Common myeloid progenitor, CD34-positive (primary cell): ENCODE measurements at regions of chr2 and their contacts with region 1.

Region 1: DNA sequence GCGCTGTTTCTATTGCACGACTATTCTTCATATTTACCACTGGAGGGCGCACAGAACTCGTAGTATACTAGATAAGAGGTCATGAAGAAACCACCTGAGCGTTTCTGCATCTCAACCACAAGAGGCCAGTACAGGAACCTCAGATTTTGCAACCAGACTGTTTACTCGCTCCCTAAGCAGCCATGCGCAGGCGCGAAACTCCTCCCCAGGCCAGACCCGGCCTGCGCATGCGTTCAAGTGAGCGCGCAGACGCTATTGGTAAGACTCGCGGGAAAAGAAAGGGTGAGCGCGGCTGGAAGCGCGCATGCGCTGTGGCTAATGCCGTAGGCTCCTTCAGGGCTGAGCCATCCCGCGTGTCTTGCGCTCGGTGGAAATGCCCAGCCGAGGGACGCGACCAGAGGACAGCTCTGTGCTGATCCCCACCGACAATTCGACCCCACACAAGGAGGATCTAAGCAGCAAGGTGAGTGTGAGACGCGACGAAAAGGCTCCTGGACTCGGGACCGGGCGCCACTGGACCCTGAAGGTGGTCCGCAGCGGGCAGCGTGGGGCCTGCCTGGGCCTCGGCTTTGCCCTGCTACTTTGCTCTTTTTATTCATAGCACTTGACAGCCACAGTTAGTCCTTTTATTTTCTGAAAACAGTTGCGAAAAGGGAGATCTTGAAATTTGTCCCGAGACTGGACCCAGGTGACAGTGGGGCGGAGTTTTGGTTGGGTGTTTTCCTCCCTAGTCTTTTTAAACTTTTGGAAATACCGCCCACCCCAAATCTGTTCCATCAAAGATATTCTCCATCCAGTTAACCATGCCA is at the start of gene ASNSD1:
- DNase-seq: peak; percentile 99 to 100 (median 99)
- H3K4me3 ChIP-seq: peak within 1 kb of the TSS; percentile 75 to 100 (median 96)
- H3K27ac ChIP-seq: peak within 1 kb of the TSS; percentile 88 to 94
- H3K4me1 ChIP-seq: peaks cover 4 to 33% (median 25%) of the 10 kb centered on the region in 4 experiments
- H3K27me3 ChIP-seq: no peaks in the 10 kb centered on the region

Region 2: DNA sequence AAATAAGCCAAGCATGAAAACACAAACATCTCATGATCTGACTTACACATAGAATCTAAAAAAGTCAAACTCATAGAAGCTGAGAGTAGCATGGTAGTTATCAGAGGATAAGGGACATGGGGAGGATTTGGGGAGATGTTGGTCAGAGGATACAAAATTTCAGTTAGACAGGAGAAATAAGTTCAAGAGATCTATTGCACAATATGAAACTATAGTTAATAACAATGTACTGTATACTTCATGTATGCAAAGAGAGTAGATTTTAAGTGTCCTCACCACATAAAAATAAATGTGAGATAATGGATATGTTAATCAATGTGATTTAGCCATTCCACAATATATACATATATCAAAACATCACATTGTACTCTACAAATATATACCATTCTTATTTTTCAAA is 10.1 kb before region 1 on chr2:
- CTCF ChIA-PET with region 1: interaction called, 14 read pairs
- POLR2A ChIA-PET with region 1: no interaction called
- DNase-seq: no peak
- H3K4me3 ChIP-seq: no peak overlapping the region
- H3K27ac ChIP-seq: no peak overlapping the region
- H3K4me1 ChIP-seq: no peaks in the 10 kb centered on the region
- H3K27me3 ChIP-seq: no peaks in the 10 kb centered on the region

Region 3: DNA sequence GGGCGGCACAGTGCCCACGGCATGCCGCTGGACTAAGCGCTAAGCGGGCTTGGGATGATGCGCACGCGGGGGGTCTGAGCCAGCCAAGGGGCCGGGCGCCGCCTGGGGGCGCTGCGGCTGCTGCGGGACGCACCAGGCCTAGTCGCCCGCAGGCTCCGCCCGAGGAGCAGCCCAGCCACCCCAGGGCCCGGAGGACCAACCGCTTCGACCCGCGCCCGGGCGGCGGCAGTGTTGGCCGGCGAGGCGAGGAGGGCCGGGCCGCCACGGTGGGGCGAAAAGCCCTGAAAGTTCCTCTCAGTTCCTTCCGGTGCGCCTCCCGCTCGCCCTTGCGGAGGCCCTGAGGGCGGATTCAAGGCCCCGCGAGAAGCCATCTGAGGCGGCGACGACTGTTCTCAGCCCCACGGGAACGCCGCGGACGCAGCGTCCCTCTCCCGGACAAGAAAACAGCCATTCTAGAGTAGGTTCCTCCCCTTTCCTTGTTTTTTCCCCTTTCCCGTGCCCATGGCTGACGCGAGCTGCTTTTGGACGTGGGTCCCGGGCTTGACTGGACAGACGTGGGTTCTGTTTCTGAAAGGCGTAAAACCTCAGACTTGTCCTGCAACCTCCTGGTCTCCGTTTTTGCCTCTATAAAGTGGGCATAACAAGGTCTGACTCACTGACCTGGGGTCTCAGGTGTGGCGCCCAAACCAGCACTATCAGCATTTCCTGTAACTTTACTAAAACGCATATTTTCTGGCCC is 13.2 kb after region 1 on chr2 and contains the start of gene ANKAR:
- CTCF ChIA-PET with region 1: interaction called, 69 read pairs
- POLR2A ChIA-PET with region 1: no interaction called
- DNase-seq: peak; percentile 94 to 95 (median 94)
- H3K4me3 ChIP-seq: peak within 1 kb of the TSS; percentile 50 to 90 (median 79)
- H3K27ac ChIP-seq: peak within 1 kb of the TSS; percentile 86 to 90
- H3K4me1 ChIP-seq: peaks cover 0 to 17% (median 11%) of the 10 kb centered on the region in 4 experiments
- H3K27me3 ChIP-seq: no peaks in the 10 kb centered on the region

Region 4: DNA sequence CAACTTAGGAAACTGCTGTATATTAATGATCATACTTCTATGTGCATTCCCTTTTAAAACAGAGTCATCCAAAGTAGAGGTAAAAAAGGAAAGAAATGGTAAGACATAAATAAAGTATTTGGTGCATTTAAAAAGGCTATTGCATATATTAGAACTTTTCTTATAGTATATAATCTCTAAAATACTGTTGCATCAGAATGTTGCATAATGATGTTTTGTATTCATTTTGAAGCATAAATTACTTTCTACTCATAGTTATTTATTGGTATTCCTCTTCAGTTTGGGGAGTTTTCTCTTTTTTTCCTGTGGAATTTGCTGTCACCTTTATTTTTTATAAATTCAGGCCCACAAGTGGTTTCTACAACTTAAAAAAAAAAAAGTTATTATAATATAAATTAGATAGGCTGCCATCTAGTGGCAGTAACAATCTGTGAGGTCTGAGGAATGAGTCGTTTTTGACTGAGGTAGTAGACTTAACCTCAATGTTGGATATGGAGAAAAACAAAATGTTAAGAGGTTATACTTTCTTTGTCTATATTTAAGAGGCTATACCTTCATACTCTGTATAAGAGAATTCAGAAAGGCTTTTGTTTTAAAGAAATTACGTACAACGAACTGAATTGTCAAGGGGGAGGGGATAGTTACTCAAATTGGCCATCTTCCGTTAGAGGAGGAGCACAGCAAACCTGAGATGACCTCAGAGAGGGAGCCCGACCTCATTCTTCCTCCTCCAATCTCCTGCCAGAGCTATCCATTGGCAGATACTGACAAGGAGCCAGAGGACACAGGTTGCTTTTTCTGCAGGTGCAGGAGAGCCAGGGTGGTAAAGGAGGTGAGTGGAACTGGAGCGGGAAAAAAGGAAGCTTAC is 36.9 kb after region 1 on chr2:
- CTCF ChIA-PET with region 1: interaction called, 67 read pairs
- POLR2A ChIA-PET with region 1: no interaction called
- DNase-seq: peak; percentile 68 to 80 (median 77)
- H3K4me3 ChIP-seq: peak overlapping the region in 3 of 7 experiments; percentile 0 to 64 (median 32)
- H3K27ac ChIP-seq: no peak overlapping the region
- H3K4me1 ChIP-seq: peaks cover 0 to 5% (median 0%) of the 10 kb centered on the region in 4 experiments
- H3K27me3 ChIP-seq: no peaks in the 10 kb centered on the region

Region 5: GRCh38 chr2:189751080-189751658 is 89.8 kb after region 1 on chr2:
- CTCF ChIA-PET with region 1: interaction called, 13 read pairs
- POLR2A ChIA-PET with region 1: no interaction called
- DNase-seq: peak; percentile 43 to 63 (median 60)
- H3K4me3 ChIP-seq: no peak overlapping the region
- H3K27ac ChIP-seq: no peak overlapping the region
- H3K4me1 ChIP-seq: no peaks in the 10 kb centered on the region
- H3K27me3 ChIP-seq: no peaks in the 10 kb centered on the region

Region 6: DNA sequence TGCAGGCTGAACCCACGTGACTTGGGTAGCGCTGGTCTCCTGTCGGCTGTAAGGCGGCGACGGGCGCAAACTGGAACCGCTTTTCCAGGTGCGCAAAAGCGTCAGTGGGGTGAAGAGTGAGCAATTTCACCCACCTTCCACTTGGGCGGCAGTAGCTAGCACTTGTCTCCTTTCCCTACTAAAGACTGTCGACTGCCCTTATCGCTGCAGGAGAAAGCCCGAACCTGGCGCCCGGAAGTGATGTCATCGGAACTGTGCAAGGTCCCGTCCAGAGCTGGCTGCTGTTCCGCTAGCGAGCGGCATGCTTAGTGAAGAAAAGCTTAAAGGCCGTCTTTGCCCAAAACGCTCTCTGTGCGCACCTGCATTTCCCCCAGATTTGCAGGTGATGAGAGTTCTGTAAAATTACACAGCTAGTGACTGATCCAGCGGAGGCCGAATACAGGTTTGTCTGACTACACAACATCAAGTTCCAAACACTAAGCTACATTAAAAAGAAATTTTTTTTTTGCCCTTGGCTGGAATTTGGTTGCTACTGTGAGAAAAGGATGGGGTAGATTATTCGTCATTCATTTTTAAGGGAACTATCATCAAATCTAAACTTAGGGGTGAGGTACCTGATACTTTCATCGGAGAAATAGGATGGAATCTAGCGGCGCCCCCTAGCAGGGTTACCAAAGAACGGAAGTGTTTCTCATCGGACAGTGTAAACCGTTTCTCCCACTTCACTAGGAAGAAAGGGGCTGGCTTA is 101.4 kb after region 1 on chr2 and contains the start of gene OSGEPL1:
- CTCF ChIA-PET with region 1: interaction called, 32 read pairs
- POLR2A ChIA-PET with region 1: interaction called, 3 read pairs
- DNase-seq: peak; percentile 98 to 99 (median 99)
- H3K4me3 ChIP-seq: peak within 1 kb of the TSS; percentile 81 to 99 (median 85)
- H3K27ac ChIP-seq: peak within 1 kb of the TSS; percentile 75 to 88
- H3K4me1 ChIP-seq: peaks cover 9 to 25% (median 16%) of the 10 kb centered on the region in 4 experiments
- H3K27me3 ChIP-seq: no peaks in the 10 kb centered on the region